CD4-positive, alpha-beta memory T cell (primary cell): ENCODE measurements at regions of chr11 and their contacts with region 1.

Region 1: DNA sequence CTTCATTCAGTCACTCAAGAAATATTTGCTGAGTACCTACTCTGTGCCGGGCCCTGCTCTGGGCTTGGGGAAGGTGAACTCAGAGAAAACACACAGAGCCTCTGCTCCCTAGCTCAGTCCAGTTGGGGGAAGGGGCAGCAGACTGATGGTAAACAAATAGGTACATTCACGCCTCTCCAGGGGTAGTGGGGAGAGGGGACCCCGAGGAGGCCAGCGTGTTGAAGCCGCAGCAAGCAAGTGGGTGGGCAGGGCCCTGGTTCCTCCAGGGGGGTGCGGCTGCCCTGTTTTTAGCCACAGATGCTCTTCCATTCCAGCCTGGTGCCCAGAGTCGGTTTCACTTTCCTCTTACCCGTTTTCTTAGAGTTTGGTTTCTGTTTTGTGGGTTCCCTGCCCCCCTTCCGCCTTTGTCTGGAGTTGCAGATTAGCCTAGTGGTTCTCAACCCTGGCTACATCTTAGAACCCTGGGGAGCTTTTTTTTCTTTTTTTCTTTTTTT is 8.7 kb downstream of the DRAP1 start:
- DNase-seq: peak; percentile 77 to 91 (median 79)
- H3K4me3 ChIP-seq: peak overlapping the region; percentile 30 to 66
- H3K4me3 Mint-ChIP-seq: peak overlapping the region; percentile 73 to 90 (median 82)
- H3K27ac ChIP-seq: peak overlapping the region; percentile 72
- H3K27ac Mint-ChIP-seq: peak overlapping the region; percentile 84 to 98 (median 95)
- H3K4me1 ChIP-seq: peaks cover 24% of the 10 kb centered on the region
- H3K4me1 Mint-ChIP-seq: peaks cover 18 to 34% (median 25%) of the 10 kb centered on the region in 4 donors
- H3K27me3 ChIP-seq: no peaks in the 10 kb centered on the region
- H3K27me3 Mint-ChIP-seq: no peaks in the 10 kb centered on the region

Region 2: GRCh38 chr11:66001942-66002647 is 74.1 kb after region 1 on chr11 and contains the starts of genes BANF1 and EIF1AD:
- CTCF ChIA-PET with region 1: no interaction called
- POLR2A ChIA-PET with region 1: interaction called, 5 read pairs
- intact Hi-C with region 1: loop called (anchors 2 kb)
- DNase-seq: peak; percentile 95 to 97 (median 96)
- H3K4me3 ChIP-seq: peak within 1 kb of the TSS; percentile 68 to 82
- H3K4me3 Mint-ChIP-seq: peak within 1 kb of the TSS; percentile 94 to 100 (median 99)
- H3K27ac ChIP-seq: peak within 1 kb of the TSS; percentile 87
- H3K27ac Mint-ChIP-seq: peak within 1 kb of the TSS; percentile 96 to 99 (median 99)
- H3K4me1 ChIP-seq: peaks cover 26% of the 10 kb centered on the region
- H3K4me1 Mint-ChIP-seq: peaks cover 12 to 49% (median 27%) of the 10 kb centered on the region in 4 donors
- H3K27me3 ChIP-seq: no peaks in the 10 kb centered on the region
- H3K27me3 Mint-ChIP-seq: no peaks in the 10 kb centered on the region
- total RNA-seq, gene BANF1: 90.8 to 92.9 TPM
- total RNA-seq, gene EIF1AD: 60.2 to 65.4 TPM